CD14-positive monocyte (primary cell): ENCODE measurements at regions of chr16 and their contacts with region 1.

Region 1: DNA sequence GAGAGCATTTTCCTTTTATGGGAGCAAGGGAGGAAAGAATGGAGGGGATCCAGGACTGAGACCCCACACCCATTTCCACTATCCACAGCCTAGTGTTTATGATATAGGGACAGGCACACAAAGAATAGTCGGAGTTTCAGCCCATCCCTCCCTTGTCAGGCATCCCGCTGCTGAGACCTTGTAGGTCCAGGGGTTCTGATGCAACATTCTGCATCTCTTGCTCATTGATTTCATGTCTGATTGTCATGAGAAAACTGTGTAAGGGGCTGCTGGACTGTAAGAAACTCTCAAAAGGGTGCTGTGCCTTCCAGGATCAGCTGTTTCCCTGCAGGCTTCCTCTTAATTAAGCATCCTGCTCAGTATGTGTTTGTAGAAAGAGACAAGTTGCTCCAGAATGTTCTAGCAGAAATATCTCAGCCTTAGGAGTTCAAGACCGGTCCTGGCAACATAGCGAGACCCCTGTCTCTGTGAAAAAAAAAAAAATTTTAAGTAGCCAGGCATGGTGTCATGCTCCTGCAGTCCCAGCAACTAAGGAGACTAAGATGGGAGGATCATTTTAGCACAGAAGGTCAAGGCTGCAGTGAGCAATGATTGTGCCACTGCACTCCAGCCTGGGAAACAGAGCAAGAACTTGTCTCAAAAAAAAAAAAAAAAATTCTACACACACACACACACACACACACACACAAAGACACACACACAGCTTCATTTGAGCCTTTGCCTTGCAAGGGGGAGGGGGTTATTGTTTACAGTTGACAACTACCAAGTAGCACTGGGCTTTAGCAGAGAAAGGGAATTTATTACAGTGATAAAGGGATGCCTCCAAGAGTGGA is 5.1 kb upstream of the POLR3E start:
- DNase-seq: no peak
- H3K4me3 ChIP-seq: no peak overlapping the region
- H3K4me3 Mint-ChIP-seq: no peak overlapping the region
- H3K27ac ChIP-seq: no peak overlapping the region
- H3K27ac Mint-ChIP-seq: no peak overlapping the region
- H3K4me1 ChIP-seq: peaks cover 8 to 9% of the 10 kb centered on the region in 2 donors
- H3K4me1 Mint-ChIP-seq: peaks cover 5% of the 10 kb centered on the region
- H3K27me3 ChIP-seq: no peaks in the 10 kb centered on the region
- H3K27me3 Mint-ChIP-seq: peaks cover 0 to 4% (median 0%) of the 10 kb centered on the region in 3 donors
- CTCF ChIP-seq: no peak

Region 2: GRCh38 chr16:22255335-22255734 is 36.7 kb before region 1 on chr16:
- intact Hi-C with region 1: loop called in 1 of 2 experiments (anchors 5 kb)
- DNase-seq: no peak
- H3K4me3 ChIP-seq: no peak overlapping the region
- H3K4me3 Mint-ChIP-seq: no peak overlapping the region
- H3K27ac ChIP-seq: no peak overlapping the region
- H3K27ac Mint-ChIP-seq: peak overlapping the region in 1 of 7 donors; percentile 46
- H3K4me1 ChIP-seq: no peaks in the 10 kb centered on the region
- H3K4me1 Mint-ChIP-seq: no peaks in the 10 kb centered on the region
- H3K27me3 ChIP-seq: no peaks in the 10 kb centered on the region
- H3K27me3 Mint-ChIP-seq: no peaks in the 10 kb centered on the region
- CTCF ChIP-seq: no peak